ENCODE measurements at regions of chr14 and their contacts with region 1.

Region 1: DNA sequence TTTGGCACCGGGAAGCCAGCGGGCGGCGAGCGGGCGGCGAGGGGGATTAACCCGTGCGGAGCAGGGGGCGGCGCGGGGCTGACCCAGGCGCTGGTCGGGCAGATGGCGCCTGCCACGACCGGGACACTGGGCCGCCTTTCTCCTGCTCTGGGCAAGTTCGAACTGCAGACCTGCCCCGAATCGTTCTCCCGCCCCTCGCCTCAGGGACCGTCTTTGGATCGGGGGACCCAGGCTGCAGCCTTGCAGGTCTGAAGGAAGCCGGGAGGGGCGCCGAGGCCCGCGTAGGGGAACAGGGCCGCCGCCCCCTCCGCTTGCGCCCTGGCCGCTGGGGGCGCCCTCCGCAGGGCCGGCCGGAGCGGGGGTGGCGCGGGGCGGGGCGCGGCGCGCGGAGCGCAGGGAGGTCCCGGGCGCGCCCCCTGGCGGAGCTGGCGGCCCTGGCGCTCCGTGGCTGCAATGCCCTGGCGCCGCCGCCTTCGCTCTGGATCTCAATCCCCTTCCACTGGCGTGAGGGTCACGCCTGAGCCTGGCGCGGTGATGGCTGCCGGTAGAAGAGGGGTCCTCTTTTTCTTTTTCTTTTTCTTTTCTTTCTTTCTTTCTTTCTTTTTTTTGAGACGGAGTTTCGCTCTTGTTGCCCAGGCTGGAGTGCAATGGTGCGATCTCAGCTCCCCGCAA is 449 bp upstream of the LTBP2 start:
- DNase-seq: peak; percentile 68
- H3K27ac ChIP-seq: peak overlapping the region; percentile 84
- CTCF ChIP-seq: peak; percentile 100

Region 2: GRCh38 chr14:74573421-74574089 is 38.9 kb before region 1 on chr14:
- CTCF ChIA-PET with region 1: interaction called, 11 read pairs
- POLR2A ChIA-PET with region 1: interaction called, 3 read pairs
- DNase-seq: peak; percentile 50
- H3K27ac ChIP-seq: peak overlapping the region; percentile 100
- CTCF ChIP-seq: no peak; the same call in 1 of the 2 replicates

Region 3: DNA sequence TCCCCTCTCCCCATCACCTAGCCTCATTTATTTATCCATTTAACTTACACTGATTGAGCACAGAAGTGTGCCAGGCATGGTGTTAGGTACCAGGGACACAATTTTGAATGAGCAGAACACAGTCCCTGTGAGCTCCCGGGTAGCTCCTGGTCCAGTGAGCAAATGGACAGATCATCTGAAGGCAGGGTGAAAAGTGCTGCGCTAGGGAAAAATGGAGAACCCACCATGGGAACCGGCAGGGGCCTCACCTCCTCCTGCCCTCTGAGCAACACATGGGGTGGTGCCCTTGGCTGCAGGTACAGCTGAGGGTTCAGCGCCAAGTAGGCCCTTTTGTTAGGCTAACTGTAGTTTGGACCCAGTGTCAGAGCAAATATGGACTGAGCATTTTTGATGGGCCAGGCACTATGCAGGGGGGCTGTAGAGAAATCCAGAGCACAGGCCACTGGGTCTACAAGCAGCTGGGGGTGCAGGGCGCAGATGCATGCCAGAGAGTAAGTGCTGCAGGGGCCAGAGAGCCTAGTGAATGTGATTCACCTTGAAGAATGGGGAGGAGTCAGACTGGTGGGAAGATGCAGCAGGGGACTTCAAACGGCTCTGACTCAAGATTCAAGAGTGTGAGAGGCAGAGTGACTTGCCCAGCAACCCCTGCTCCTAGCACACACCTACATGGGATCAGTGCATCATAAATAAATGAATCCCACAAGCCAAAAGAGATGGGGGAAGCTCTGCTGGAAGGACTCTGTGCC is 28.6 kb before region 1 on chr14:
- CTCF ChIA-PET with region 1: no interaction called
- POLR2A ChIA-PET with region 1: no interaction called
- DNase-seq: peak; percentile 90
- H3K27ac ChIP-seq: peak overlapping the region; percentile 96
- CTCF ChIP-seq: no peak

Region 4: GRCh38 chr14:74599321-74599761 is 13.1 kb before region 1 on chr14:
- CTCF ChIA-PET with region 1: interaction called, 11 read pairs
- POLR2A ChIA-PET with region 1: no interaction called
- DNase-seq: no peak
- H3K27ac ChIP-seq: peak overlapping the region; percentile 59
- CTCF ChIP-seq: no peak

Region 5: DNA sequence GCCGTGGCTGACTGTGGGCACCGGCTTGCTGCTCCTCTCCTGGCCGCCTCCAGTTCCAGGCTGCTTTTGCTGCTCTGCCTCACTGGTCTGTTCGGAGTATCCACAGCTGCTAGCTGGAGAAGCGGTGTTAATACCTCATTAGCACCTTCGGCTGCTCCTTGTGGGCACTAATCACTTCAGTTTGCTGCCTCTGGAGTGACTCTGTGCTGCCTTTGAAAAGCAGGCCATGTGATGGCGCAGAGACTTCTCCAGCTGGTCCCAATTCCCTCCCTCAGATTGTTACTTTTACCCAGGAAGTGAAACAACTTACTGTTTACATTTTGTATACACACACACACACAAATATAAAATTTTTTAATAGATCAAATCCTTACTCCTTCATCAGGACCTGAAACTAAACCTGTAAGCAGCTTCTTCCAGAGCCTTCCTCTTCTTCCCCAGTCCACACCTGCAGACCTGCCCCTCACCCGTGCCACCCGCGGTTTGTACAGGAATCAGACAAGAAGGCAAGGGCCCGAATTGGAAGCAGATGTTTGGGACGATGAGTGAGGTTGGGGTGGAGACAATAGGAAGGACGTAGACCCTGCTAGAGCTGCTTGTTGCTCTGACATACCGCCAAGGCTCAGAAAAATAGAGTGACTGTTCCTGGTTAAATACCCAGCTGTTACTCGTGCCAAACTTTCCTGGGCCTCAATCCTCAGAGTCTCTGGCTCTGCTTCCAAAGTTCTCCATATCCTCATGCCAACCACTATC is 41.1 kb after region 1 on chr14:
- CTCF ChIA-PET with region 1: interaction called, 15 read pairs
- POLR2A ChIA-PET with region 1: interaction called, 3 read pairs
- DNase-seq: no peak
- H3K27ac ChIP-seq: no peak overlapping the region
- CTCF ChIP-seq: no peak

Region 6: DNA sequence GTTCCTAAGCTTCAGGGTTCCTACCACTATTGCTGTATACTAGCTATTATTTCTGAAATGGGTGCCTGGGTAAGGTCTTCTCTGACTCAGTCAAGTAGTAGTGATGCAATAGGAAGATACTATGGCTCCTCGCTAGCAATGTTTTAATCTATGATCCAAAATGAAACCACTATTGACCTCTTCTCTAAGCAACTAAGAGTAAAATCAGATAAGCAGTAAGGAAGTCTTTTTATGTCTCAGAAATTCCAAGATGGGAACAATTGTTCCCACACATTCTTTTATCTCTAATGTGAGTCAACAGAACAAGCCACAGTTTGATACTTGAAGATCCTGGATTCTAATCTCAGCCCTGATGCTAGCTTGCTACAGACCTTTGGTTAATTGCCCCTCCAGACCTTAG is 55.3 kb after region 1 on chr14:
- CTCF ChIA-PET with region 1: interaction called, 10 read pairs
- POLR2A ChIA-PET with region 1: no interaction called
- DNase-seq: no peak
- H3K27ac ChIP-seq: no peak overlapping the region
- CTCF ChIP-seq: no peak